ENCODE measurements at regions of chr6 and their contacts with region 1.

Region 1: DNA sequence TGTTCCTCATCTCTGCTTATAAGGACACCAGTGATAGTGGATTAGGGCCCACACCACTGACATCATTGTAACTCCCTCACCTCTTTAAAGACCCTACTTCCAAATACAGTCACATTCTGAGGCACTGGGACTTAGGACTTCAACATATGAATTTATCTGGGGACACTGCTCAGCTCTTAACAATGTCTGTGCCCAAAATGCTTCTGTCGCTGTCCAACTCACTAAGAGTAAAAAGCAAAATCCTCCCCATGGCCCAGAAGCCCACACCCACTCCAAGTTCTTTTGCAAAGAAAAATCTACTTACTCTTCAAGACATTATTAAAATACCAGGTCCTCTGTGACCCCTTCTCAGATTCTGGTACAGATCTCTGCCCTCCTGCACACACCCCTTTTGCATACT is 116.2 kb downstream of the TBC1D7 start:
- DNase-seq: no peak
- ATAC-seq: no peak
- H3K4me3 ChIP-seq: no peak overlapping the region
- H3K4me3 Mint-ChIP-seq: no peak overlapping the region
- H3K27ac ChIP-seq: no peak overlapping the region
- H3K27ac Mint-ChIP-seq: no peak overlapping the region
- H3K4me1 ChIP-seq: peaks cover 7% of the 10 kb centered on the region in 2 donors
- H3K4me1 Mint-ChIP-seq: peaks cover 10% of the 10 kb centered on the region
- H3K27me3 ChIP-seq: no peaks in the 10 kb centered on the region
- H3K27me3 Mint-ChIP-seq: no peaks in the 10 kb centered on the region
- CTCF ChIP-seq: no peak

Region 2: DNA sequence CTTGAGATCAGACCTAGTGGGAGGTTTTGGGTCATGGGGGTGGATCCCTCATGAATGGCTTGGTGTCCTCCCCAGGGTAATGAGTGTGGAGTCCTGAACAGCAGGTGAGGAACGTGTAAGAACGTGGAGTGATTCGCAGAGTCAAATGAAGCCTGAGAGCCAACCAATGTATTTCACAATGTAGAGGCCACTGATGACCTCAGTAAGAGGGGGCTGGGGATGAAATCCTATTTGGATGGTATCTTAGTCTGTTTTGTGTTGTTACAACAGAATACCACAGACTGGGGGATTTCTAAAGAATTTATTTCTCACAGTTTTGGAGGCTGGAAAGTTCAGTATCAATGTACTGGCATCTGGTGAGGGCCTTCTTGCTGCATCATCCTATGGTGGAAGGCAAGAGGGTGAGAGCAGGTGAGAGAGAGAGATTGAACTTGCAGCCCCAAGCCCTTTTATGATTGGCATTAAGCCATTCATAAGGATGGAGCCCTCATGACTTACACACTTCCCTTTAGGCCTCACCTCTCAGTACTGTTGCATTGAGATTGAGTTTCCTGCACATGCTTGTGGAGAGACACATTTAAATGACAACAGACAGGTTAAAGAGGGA is 1247.3 kb before region 1 on chr6:
- CTCF ChIA-PET with region 1: no interaction called
- POLR2A ChIA-PET with region 1: interaction called, 12 read pairs
- intact Hi-C with region 1: no loop called
- DNase-seq: no peak
- ATAC-seq: no peak
- H3K4me3 ChIP-seq: no peak overlapping the region
- H3K4me3 Mint-ChIP-seq: no peak overlapping the region
- H3K27ac ChIP-seq: no peak overlapping the region
- H3K27ac Mint-ChIP-seq: no peak overlapping the region
- H3K4me1 ChIP-seq: peaks cover 15 to 16% of the 10 kb centered on the region in 2 donors
- H3K4me1 Mint-ChIP-seq: peaks cover 17% of the 10 kb centered on the region
- H3K27me3 ChIP-seq: no peaks in the 10 kb centered on the region
- H3K27me3 Mint-ChIP-seq: no peaks in the 10 kb centered on the region
- CTCF ChIP-seq: no peak

Region 3: DNA sequence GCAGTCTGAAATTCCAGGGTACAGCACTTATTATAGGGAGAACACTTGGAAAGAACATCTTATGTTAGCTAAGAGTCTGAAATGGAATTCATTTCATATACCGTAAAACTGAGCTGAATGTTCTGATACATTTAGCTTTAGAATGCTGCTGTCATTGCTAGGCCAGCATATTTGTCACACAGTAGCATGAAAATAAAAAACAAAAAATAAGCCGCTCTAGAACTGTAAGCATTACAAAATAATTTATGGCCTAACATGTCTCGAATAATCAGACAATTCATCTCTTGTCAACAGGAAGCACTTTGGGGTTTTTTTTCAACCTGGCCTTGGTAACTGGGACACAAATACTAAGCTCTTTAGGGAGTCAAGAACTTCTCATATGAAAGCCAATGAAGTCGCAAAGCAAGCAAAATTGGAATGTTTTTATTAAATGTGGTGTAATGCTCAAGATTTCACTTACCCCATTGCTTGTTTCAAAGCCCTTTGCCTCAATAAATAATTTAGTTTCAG is 379.8 kb before region 1 on chr6:
- CTCF ChIA-PET with region 1: no interaction called
- POLR2A ChIA-PET with region 1: no interaction called
- intact Hi-C with region 1: no loop called
- DNase-seq: no peak
- ATAC-seq: no peak
- H3K4me3 ChIP-seq: no peak overlapping the region
- H3K4me3 Mint-ChIP-seq: no peak overlapping the region
- H3K27ac ChIP-seq: no peak overlapping the region
- H3K27ac Mint-ChIP-seq: no peak overlapping the region
- H3K4me1 ChIP-seq: no peaks in the 10 kb centered on the region
- H3K4me1 Mint-ChIP-seq: no peaks in the 10 kb centered on the region
- H3K27me3 ChIP-seq: no peaks in the 10 kb centered on the region
- H3K27me3 Mint-ChIP-seq: peaks cover 21% of the 10 kb centered on the region
- CTCF ChIP-seq: no peak

Region 4: GRCh38 chr6:13229205-13230085 is 17.3 kb after region 1 on chr6:
- CTCF ChIA-PET with region 1: no interaction called
- POLR2A ChIA-PET with region 1: no interaction called
- intact Hi-C with region 1: no loop called
- DNase-seq: peak; percentile 69
- ATAC-seq: peak; percentile 77
- H3K4me3 ChIP-seq: no peak overlapping the region
- H3K4me3 Mint-ChIP-seq: peak overlapping the region; percentile 62
- H3K27ac ChIP-seq: no peak overlapping the region
- H3K27ac Mint-ChIP-seq: no peak overlapping the region
- H3K4me1 ChIP-seq: peaks cover 20 to 23% of the 10 kb centered on the region in 2 donors
- H3K4me1 Mint-ChIP-seq: peaks cover 31% of the 10 kb centered on the region
- H3K27me3 ChIP-seq: peaks cover 0 to 30% (median 9%) of the 10 kb centered on the region in 4 experiments
- H3K27me3 Mint-ChIP-seq: peaks cover 16% of the 10 kb centered on the region
- CTCF ChIP-seq: no peak

Region 5: DNA sequence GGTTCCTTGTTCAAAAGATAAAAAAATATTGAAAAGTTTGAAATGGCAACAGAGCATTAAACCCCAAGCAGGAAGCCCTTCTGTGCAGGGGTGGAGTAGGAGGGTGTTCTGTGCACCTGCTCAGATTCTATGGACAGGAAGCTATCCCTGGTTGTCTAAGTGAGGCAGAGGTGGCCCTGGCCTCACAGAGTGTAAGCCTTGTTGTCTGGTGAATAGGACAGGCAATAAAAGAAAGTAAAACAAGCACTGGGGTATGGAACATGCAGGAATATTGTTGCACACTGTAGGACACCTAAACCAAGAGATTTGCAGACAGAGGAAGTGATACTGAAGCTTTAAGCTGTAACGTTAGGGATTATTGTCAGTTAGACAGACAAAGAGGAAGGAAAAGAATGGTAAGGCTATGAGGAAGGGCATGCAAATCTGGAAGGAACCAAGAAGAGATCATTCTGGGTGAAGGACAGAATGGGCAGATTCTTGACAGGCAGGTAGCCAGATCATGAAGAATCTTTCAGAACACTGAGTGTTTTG is 49.4 kb after region 1 on chr6:
- CTCF ChIA-PET with region 1: no interaction called
- POLR2A ChIA-PET with region 1: interaction called, 12 read pairs
- intact Hi-C with region 1: no loop called
- DNase-seq: peak; percentile 91
- ATAC-seq: peak; percentile 76
- H3K4me3 ChIP-seq: peak overlapping the region; percentile 25 to 55 (median 36)
- H3K4me3 Mint-ChIP-seq: peak overlapping the region; percentile 75
- H3K27ac ChIP-seq: peak overlapping the region; percentile 93
- H3K27ac Mint-ChIP-seq: peak overlapping the region; percentile 86
- H3K4me1 ChIP-seq: peaks cover 73 to 87% of the 10 kb centered on the region in 2 donors
- H3K4me1 Mint-ChIP-seq: peaks cover 89% of the 10 kb centered on the region
- H3K27me3 ChIP-seq: no peaks in the 10 kb centered on the region
- H3K27me3 Mint-ChIP-seq: no peaks in the 10 kb centered on the region
- CTCF ChIP-seq: no peak